ENCODE measurements at regions of chr12 and their contacts with region 1.

Region 1: GRCh38 chr12:51341259-51342007 is 5.0 kb downstream of the CELA1 start:
- DNase-seq: peak in 4 of 5 donors; percentile 42 to 64 (median 46)
- ATAC-seq: peak; percentile 42 to 88 (median 88)
- H3K4me3 ChIP-seq: peak overlapping the region in 8 of 12 donors; percentile 8 to 51 (median 28)
- H3K27ac ChIP-seq: peak overlapping the region in 1 of 12 donors; percentile 1
- H3K4me1 ChIP-seq: peaks cover 0 to 6% (median 1%) of the 10 kb centered on the region in 12 donors
- H3K27me3 ChIP-seq: no peaks in the 10 kb centered on the region
- CTCF ChIP-seq: peak; percentile 89 to 99 (median 94)
- POLR2A ChIP-seq: no peak

Region 2: GRCh38 chr12:50825372-50825838 is 516.0 kb before region 1 on chr12:
- intact Hi-C with region 1: loop called in 7 of 10 experiments (anchors 2 to 10 kb)
- DNase-seq: no peak
- ATAC-seq: peak; percentile 54 to 83 (median 70)
- H3K4me3 ChIP-seq: no peak overlapping the region
- H3K27ac ChIP-seq: peak overlapping the region in 10 of 12 donors; percentile 18 to 70 (median 62)
- H3K4me1 ChIP-seq: peaks cover 0 to 11% (median 0%) of the 10 kb centered on the region in 12 donors
- H3K27me3 ChIP-seq: no peaks in the 10 kb centered on the region
- CTCF ChIP-seq: peak; percentile 30 to 66 (median 53)
- POLR2A ChIP-seq: no peak

Region 3: GRCh38 chr12:51270067-51270970 is 71.1 kb before region 1 on chr12 and contains the start of gene SMAGP:
- intact Hi-C with region 1: loop called in 7 of 10 experiments (anchors 1 to 10 kb)
- DNase-seq: peak; percentile 63 to 79 (median 72)
- ATAC-seq: peak; percentile 25 to 91 (median 78)
- H3K4me3 ChIP-seq: peak within 1 kb of the TSS; percentile 55 to 86 (median 72)
- H3K27ac ChIP-seq: peak within 1 kb of the TSS; percentile 6 to 87 (median 80)
- H3K4me1 ChIP-seq: peaks cover 0 to 20% (median 3%) of the 10 kb centered on the region in 12 donors
- H3K27me3 ChIP-seq: peaks cover 0 to 9% (median 0%) of the 10 kb centered on the region in 9 donors
- CTCF ChIP-seq: peak in 5 of 12 donors; percentile 8 to 33 (median 11)
- POLR2A ChIP-seq: no peak
- total RNA-seq, gene SMAGP: 2.0 to 7.4 (median 3.7) TPM